ENCODE measurements at regions of chr1 and their contacts with region 1.

Region 1: DNA sequence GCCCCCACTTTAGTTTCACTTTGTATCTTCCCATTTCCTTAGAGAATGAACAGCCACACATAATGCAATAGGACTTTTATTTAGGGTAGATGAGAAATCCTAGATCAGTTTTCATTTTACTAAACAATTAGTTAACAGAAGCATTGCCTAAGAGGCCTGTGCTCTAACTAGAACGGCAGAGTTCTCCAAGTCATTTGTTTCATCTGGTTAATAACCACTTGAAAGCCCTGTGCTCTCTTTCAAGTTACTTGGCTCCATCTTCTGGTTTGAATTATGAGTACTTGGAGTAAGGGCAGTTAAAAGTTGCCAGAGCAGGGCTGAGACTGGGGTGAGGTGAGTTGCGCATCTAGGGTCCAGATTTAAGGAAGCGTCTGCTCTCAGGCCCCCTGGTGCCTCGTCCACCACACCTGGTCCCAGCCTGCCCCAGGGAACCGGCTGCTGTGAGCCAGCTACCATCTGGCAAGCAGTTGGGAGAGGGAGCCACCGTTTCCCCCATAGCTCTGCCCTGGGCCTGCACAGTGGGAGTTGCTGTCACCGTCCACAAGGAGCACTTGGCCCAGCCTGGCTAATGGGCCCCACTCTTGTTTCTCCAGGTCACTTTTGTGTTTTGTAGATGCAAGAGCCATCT is 18.1 kb upstream of the SLC44A3 start:
- DNase-seq: peak; percentile 79
- H3K4me3 ChIP-seq: peak overlapping the region in 2 of 3 experiments; percentile 6 to 20
- H3K27ac ChIP-seq: peak overlapping the region; percentile 75
- H3K4me1 ChIP-seq: peaks cover 47% of the 10 kb centered on the region
- H3K27me3 ChIP-seq: no peaks in the 10 kb centered on the region
- CTCF ChIP-seq: peak; percentile 61 to 68

Region 2: DNA sequence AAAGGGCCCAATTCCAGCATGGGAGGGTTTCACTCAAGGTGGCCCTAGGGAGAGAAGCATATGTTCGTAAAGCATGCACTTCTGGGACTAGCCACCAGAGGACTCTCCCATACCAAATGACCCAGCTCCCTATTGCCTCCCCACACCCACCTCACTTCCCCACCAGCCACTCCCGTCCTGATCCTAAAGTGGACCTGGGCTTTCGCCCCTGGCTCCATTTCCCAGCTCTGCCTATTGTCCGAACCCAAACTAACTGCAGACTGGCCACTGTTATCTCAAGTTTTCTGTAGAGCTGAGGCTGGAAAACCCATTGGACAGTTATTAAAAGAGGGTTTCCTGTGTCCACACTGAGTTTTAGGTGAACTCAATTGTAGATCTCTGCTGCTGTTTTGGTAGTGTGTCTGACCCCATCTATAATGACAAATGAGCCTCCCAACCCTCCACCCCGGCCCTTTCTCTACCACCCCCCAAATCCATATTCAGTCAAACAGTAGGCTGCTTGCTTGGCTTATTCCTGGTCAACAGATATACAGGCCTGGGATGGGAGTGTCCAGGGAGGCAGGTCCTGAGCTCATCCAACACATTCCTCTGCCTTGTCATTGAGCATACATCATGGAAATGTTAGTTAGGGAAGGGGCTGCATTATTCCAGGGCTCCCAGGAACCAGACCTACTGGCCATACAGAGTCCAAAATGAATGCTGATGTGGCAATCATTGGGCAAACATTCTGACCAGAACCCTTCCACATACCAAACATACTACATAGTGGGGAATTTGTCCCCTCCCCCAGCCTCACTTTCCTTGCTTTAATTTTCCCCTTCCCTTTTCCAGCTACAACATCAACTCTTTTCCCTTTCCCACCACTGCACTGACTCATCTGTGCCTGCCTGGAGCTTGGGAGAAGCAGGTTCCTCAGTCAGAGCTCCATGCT is 740.3 kb before region 1 on chr1:
- CTCF ChIA-PET with region 1: no interaction called
- dilution Hi-C with region 1: no loop called
- in situ Hi-C with region 1: no loop called
- intact Hi-C with region 1: loop called (anchors 5 kb)
- DNase-seq: peak; percentile 47
- H3K4me3 ChIP-seq: no peak overlapping the region
- H3K27ac ChIP-seq: no peak overlapping the region
- H3K4me1 ChIP-seq: peaks cover 7% of the 10 kb centered on the region
- H3K27me3 ChIP-seq: no peaks in the 10 kb centered on the region
- CTCF ChIP-seq: peak; percentile 92 to 96

Region 3: DNA sequence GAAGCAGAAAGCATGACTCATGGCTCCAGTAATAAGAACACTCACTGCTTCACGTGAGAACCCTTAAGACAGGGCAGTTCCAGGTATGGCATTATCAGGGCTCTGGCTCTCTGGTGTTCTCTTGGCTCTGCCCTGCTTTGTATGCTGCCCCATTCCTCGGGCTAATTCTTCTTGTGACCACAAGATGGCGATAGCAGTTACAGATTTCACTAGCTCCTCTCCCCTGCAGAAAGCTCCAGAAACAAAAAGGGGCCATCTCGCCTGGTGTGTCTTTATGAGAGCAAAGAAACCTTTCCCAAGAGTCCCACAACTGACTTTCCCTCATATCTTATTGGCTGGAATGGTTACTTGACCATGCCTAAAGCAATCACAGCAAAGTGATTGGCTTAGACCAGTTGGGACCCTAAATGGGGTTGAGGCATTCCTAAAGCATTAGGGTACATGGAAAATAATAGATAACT is 320.5 kb before region 1 on chr1:
- CTCF ChIA-PET with region 1: no interaction called
- dilution Hi-C with region 1: no loop called
- in situ Hi-C with region 1: no loop called
- intact Hi-C with region 1: loop called (anchors 1 kb)
- DNase-seq: peak; percentile 82
- H3K4me3 ChIP-seq: no peak overlapping the region
- H3K27ac ChIP-seq: no peak overlapping the region
- H3K4me1 ChIP-seq: no peaks in the 10 kb centered on the region
- H3K27me3 ChIP-seq: no peaks in the 10 kb centered on the region
- CTCF ChIP-seq: peak; percentile 83 to 90

Region 4: GRCh38 chr1:94527447-94528031 is 274.5 kb before region 1 on chr1:
- CTCF ChIA-PET with region 1: no interaction called
- dilution Hi-C with region 1: no loop called
- in situ Hi-C with region 1: loop called (anchors 5 kb)
- intact Hi-C with region 1: loop called (anchors 1 kb)
- DNase-seq: peak; percentile 89
- H3K4me3 ChIP-seq: no peak overlapping the region
- H3K27ac ChIP-seq: peak overlapping the region; percentile 8
- H3K4me1 ChIP-seq: no peaks in the 10 kb centered on the region
- H3K27me3 ChIP-seq: no peaks in the 10 kb centered on the region
- CTCF ChIP-seq: peak; percentile 8 to 21

Region 5: DNA sequence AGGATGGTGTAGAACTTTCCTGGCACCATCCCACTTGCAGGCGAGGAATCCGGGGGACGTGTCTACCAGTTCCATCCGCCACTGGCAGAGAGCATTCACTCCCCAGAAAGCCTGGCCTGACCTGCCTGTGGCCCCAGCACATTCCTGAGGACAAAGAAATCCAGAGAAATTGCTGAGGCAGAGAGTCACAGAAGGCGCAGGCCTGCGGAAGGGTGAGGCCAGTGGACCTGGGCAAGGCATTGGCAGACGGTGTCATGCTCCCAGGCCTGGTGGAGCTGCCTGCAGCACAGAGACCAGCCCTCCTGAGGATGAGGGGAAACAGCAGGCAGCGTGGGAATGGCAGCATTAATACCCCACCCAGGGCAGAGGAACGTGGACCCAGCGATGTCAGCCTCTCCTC is 179.3 kb before region 1 on chr1:
- CTCF ChIA-PET with region 1: no interaction called
- dilution Hi-C with region 1: no loop called
- in situ Hi-C with region 1: no loop called
- intact Hi-C with region 1: loop called (anchors 1 kb)
- DNase-seq: peak; percentile 91
- H3K4me3 ChIP-seq: no peak overlapping the region
- H3K27ac ChIP-seq: peak overlapping the region; percentile 87
- H3K4me1 ChIP-seq: peaks cover 55% of the 10 kb centered on the region
- H3K27me3 ChIP-seq: no peaks in the 10 kb centered on the region
- CTCF ChIP-seq: no peak

Region 6: DNA sequence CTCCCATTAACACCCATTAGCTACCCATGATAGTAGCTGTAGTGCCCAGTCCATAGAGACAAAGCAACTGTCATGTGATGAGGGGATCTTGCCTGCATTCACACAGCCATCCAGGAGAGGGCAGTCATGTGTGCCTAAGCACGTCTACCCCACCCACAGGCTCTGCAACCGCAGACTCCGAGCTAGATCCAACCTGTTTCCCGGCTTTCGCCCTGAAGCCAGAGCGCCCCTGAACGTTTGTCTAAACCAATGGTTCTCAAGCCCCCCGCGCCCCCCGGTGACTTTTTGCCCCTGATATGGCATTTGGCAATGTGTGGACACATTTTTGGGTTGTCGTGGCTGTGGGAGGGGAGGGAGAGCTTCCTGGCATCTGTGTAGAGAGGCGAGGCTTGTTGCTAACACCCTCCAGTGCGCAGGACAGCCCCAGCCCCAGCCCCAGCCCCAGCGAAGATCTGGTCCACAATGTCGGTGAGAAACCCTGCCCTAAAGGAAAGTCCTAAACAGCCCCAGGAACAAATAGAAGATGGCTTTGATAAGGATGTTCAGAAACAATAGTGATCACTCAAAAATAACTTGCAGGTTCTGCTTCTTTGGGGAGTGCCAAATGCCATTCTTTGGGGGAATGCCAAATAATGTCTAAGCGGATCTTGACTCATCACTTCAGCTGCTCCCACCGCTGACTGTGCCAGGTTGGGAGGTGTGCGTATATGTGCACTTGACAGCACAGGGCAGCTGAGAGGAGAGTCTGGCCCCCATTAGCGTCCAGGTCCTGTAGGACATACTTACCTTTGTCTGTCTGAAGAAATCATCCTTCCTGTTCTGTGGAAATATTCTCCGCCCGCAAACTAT is 52.6 kb after region 1 on chr1:
- CTCF ChIA-PET with region 1: no interaction called
- dilution Hi-C with region 1: no loop called
- in situ Hi-C with region 1: no loop called
- intact Hi-C with region 1: loop called (anchors 1 kb)
- DNase-seq: peak; percentile 96
- H3K4me3 ChIP-seq: peak overlapping the region; percentile 24 to 49 (median 26)
- H3K27ac ChIP-seq: peak overlapping the region; percentile 56
- H3K4me1 ChIP-seq: peaks cover 21% of the 10 kb centered on the region
- H3K27me3 ChIP-seq: no peaks in the 10 kb centered on the region
- CTCF ChIP-seq: peak; percentile 91 to 96

Region 7: DNA sequence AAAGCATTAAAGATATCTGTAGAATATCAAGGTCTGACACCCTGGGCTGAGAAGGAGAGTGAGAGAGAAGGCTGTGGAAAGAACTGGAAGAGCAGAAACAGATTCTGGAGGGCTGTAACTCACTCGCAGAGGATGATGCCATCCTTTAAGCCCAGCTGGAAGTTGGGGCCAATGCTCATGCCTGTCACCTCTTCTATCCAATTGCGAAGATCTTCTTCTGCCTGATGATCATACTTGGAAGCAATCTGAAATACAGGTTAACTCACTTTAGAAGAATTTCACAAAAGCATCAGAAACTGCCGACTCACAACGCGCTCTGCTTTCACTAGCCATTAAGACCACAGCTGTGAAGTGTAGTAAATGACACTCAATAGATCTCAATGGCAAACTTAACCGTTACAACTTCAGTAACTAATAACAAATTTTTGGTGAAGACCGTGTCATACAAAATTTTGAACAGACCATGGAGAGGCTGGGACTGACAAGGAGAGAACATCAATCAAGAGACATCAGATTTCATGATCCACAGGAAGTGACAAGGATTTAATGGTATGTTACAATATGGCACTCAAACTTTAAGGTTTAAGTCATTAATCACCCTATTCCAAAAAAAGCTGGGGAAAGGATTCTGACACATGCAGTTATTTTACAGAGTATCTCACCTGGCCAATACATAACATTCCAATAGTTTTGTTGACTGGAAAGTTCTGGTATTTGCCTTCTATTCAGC is 101.4 kb after region 1 on chr1:
- CTCF ChIA-PET with region 1: no interaction called
- dilution Hi-C with region 1: no loop called
- in situ Hi-C with region 1: no loop called
- intact Hi-C with region 1: no loop called
- DNase-seq: no peak
- H3K4me3 ChIP-seq: no peak overlapping the region
- H3K27ac ChIP-seq: no peak overlapping the region
- H3K4me1 ChIP-seq: peaks cover 23% of the 10 kb centered on the region
- H3K27me3 ChIP-seq: no peaks in the 10 kb centered on the region
- CTCF ChIP-seq: no peak